PC-9 (cell line): ENCODE measurements at regions of chr17 and their contacts with region 1.

Region 1: DNA sequence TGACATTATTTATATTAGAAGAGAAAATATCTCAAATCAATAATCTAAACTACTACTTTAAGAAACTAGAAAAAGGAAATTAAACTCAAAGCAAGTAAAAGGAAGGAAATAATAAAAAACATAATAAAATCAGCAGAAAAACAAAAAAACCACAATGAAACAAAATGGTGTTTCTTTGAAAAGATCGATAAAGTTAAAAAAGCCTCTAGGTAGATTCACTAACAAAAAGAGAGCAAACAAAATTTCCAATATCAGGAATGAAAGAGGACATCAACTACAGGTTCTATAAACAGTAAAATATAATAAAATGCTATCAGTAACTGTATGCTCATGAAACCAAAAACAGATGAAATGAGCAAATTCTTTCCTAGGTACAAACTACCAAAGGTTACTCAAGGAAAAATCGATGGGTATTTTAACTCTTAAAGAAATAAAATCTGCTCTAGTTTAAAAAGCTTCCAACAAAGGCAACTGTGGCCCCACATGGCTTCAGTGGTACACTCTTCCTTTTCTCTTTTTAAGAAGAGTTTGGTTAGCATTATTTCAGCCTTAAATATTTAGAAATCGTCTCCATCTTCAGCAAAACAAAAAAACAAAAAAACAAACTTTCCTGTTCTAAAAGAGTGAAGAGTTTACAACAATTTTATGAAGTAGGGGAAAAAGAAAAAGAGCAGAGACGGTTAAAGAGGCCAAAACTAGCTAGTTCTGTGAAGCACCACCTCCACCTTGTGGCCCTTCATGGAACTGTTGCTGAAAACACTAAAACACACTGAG is 102.2 kb downstream of the TRIM37 start:
- DNase-seq: peak in 1 of 2 experiments; percentile 43
- H3K4me3 ChIP-seq: no peak overlapping the region
- H3K27ac ChIP-seq: no peak overlapping the region
- H3K4me1 ChIP-seq: no peaks in the 10 kb centered on the region
- H3K27me3 ChIP-seq: no peaks in the 10 kb centered on the region
- CTCF ChIP-seq: peak; percentile 97

Region 2: DNA sequence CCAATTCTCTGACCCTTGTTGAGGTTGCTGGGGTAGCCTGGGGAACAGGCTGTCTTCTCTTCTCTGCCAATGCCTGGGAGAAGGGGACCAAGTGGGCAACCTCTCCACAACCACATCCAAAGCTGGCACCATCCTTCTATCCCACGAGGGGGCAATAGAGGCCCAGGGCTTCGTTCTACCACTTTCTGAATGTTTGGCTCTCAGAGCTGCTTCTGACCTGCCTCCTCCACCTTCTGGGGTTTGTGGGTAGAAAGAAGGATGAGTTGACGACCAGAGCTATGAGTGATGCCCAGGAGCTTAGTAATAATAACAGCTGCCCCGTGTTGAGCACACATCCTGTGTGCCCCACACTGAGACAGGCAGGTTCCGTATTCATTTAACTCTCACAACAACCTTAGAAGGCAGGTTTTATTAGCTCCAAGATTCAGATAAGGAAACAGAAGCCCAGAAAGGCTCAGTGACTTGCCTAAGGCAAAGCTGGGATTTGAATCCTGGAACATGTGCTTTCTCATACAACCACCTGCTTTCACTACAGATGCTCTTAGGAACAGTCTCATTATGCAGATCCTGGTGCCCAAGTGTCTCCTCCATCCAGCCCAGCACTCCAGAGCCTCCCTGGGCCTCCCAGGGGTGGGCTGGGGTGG is 687.0 kb before region 1 on chr17:
- CTCF ChIA-PET with region 1: no interaction called
- POLR2A ChIA-PET with region 1: no interaction called
- intact Hi-C with region 1: loop called (anchors 10 kb)
- DNase-seq: peak; percentile 58 to 71
- H3K4me3 ChIP-seq: no peak overlapping the region
- H3K27ac ChIP-seq: no peak overlapping the region
- H3K4me1 ChIP-seq: no peaks in the 10 kb centered on the region
- H3K27me3 ChIP-seq: peaks cover 60% of the 10 kb centered on the region; the same call in 1 of the 2 replicates
- CTCF ChIP-seq: peak; percentile 88

Region 3: GRCh38 chr17:58587702-58588254 is 416.7 kb before region 1 on chr17:
- CTCF ChIA-PET with region 1: no interaction called
- POLR2A ChIA-PET with region 1: no interaction called
- intact Hi-C with region 1: loop called (anchors 1 kb)
- DNase-seq: peak; percentile 41 to 55
- H3K4me3 ChIP-seq: no peak overlapping the region
- H3K27ac ChIP-seq: no peak overlapping the region
- H3K4me1 ChIP-seq: no peaks in the 10 kb centered on the region
- H3K27me3 ChIP-seq: no peaks in the 10 kb centered on the region
- CTCF ChIP-seq: peak; percentile 98

Region 4: DNA sequence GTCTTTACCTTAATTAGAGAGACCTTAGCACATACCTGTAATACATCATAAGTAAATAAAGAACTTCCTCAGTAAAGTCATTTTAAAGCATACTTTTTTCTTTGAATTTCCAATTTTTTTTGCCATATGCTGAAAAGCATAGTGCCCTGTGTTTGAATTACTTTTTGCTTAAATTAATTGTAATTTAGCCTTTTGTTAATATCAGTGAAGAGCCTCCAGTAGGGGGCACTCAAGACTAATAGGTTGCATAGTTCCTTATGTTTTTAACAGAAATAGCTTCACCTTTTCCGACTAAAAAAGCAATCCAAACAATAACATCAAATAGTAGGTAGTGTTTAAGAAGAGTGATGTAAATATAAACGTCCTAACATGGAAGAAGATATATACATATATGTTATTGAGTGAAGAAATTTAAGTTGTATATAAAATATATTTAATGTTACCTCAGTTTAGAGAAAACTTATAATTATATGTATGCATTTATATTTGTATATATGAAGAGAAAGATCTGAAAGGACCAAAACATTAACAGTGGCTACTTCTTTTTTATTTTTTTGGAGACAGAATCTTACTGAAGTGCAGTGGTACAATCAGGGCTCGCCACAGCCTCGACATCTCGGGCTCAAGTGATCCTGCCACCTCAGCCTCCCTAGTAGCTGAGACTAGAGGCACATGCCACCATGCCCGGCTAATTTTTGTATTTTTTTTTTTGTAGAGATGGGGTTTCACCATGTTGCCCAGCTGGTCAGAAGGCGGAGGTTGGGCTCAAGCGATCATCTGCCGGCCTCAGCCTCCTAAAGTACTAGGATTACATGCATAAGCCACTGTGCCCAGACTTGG is 293.4 kb before region 1 on chr17:
- CTCF ChIA-PET with region 1: interaction called, 3 read pairs
- POLR2A ChIA-PET with region 1: no interaction called
- intact Hi-C with region 1: loop called (anchors 2 kb)
- DNase-seq: no peak
- H3K4me3 ChIP-seq: no peak overlapping the region
- H3K27ac ChIP-seq: no peak overlapping the region
- H3K4me1 ChIP-seq: no peaks in the 10 kb centered on the region
- H3K27me3 ChIP-seq: no peaks in the 10 kb centered on the region
- CTCF ChIP-seq: peak; percentile 98

Region 5: DNA sequence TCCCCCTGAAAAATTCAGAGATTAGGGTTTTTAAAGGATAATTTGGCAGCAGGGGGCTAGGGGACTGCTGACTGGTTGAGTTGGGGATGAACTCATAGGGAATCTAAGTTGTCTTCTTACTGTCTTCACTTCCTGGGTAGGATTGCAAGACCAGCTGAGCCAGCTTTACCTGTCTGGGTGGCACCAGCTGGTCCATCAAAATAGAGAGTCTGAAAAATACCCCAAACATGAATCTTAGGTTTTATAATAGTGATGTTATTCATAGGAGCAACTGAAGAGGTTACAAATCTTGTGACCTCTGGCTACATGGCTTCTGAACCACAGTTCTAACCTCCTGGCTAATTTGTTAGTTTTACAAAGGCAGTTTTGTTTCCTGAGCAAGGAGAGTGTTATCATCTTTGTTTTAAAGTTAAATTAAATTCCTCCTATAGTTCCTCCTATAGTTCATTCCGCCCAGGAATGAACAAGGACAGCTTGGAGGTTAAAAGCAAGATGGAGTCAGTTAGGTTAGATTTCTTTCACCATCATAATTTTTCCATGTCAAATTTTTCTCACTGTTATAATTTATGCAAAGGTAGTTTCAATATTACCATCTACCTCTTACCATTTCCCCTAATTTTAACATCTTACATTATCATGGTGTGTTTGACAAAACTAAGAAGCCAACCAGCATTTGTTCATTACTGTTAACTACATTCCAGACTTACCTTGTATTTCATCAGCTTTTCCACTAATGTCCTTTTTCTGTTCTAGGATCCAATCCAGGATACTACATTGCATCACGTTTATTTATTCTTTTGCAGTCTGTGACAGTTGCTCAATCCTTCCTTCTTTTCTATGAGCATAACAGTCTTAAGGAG is 90.7 kb before region 1 on chr17:
- CTCF ChIA-PET with region 1: interaction called, 12 read pairs
- POLR2A ChIA-PET with region 1: no interaction called
- intact Hi-C with region 1: no loop called
- DNase-seq: no peak
- H3K4me3 ChIP-seq: no peak overlapping the region
- H3K27ac ChIP-seq: no peak overlapping the region
- H3K4me1 ChIP-seq: peaks cover 10% of the 10 kb centered on the region
- H3K27me3 ChIP-seq: no peaks in the 10 kb centered on the region
- CTCF ChIP-seq: no peak

Region 6: DNA sequence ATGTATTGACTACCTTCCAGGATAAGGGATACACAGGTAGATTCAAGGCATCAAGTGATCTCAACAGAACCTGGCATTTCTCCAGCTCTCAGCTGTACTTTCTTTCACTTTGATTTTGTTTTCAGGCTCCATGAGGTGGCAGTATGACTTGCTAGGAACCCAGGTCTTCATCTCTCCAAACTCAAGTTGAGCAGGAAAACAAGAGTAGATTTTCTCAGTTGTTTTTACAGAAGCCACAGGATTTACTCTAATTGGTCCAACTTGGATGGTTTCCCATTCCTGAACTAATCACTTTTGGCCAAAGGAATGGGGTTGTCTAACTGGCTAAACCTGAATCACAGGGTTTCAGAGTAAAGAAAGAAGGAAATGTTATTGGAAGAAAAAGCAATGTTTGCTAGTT is 44.5 kb before region 1 on chr17:
- CTCF ChIA-PET with region 1: no interaction called
- POLR2A ChIA-PET with region 1: no interaction called
- intact Hi-C with region 1: loop called (anchors 1 kb)
- DNase-seq: peak; percentile 33 to 90
- H3K4me3 ChIP-seq: no peak overlapping the region
- H3K27ac ChIP-seq: no peak overlapping the region
- H3K4me1 ChIP-seq: peaks cover 28% of the 10 kb centered on the region
- H3K27me3 ChIP-seq: no peaks in the 10 kb centered on the region
- CTCF ChIP-seq: peak; percentile 49; the same call in 1 of the 2 replicates

Region 7: GRCh38 chr17:59400858-59401257 is 396.3 kb after region 1 on chr17:
- CTCF ChIA-PET with region 1: no interaction called
- POLR2A ChIA-PET with region 1: no interaction called
- intact Hi-C with region 1: no loop called
- DNase-seq: no peak
- H3K4me3 ChIP-seq: no peak overlapping the region
- H3K27ac ChIP-seq: no peak overlapping the region
- H3K4me1 ChIP-seq: peaks cover 1% of the 10 kb centered on the region; the same call in 1 of the 2 replicates
- H3K27me3 ChIP-seq: no peaks in the 10 kb centered on the region
- CTCF ChIP-seq: no peak